Right lobe of liver (tissue), 6 donors: ENCODE measurements at regions of chr21 and their contacts with region 1.

Region 1: DNA sequence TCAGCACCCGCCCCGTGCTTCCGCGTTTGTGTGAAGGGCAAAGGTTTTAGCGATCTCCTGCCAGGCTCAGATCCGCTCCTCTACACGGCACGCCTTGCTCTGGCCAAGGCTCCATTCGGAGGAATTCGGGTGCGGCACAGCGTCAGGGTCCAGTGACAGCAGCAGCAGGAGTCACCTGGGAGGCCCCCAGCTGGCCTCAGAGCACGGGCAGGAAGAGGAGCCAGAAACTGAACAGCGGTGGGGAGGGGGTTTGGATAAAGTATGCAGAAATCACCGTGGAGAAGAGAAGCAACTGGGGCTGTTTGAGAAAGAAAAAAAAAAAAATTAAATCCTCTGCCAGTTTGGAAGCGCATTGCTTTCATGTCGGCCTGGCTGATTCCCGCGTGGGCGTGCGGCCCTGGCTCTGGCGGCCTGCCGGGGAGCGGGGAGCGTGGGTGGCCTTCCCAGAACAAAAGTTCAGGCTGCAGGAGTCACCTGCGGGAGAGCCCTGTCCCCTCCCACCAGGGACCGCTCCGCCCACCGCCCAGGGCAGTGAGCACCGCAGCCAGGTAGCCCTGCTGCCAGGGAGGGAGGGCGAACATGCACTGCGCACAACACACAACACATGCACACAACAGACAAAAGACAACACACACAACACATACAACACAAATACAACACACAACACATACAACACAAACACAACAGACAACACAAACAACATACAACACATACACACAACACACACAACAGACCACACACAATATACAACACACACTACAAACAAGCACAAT is 107.6 kb downstream of the ETS2 start:
- DNase-seq: peak; percentile 93 to 96 (median 96)
- ATAC-seq: peak; percentile 70 to 90 (median 82)
- H3K4me3 ChIP-seq: peak overlapping the region in 2 of 3 donors; percentile 39 to 43
- H3K27ac ChIP-seq: peak overlapping the region; percentile 93 to 98 (median 94)
- H3K4me1 ChIP-seq: peaks cover 0 to 79% (median 38%) of the 10 kb centered on the region in 4 donors
- H3K27me3 ChIP-seq: no peaks in the 10 kb centered on the region
- CTCF ChIP-seq: no peak
- POLR2A ChIP-seq: peak; percentile 79

Region 2: GRCh38 chr21:38733973-38734546 is 179.2 kb before region 1 on chr21:
- intact Hi-C with region 1: no loop called
- DNase-seq: peak; percentile 87 to 90 (median 88)
- ATAC-seq: peak; percentile 94 to 99 (median 97)
- H3K4me3 ChIP-seq: peak overlapping the region in 1 of 3 donors; percentile 17
- H3K27ac ChIP-seq: peak overlapping the region; percentile 35 to 63 (median 41)
- H3K4me1 ChIP-seq: peaks cover 0 to 3% (median 0%) of the 10 kb centered on the region in 4 donors
- H3K27me3 ChIP-seq: no peaks in the 10 kb centered on the region
- CTCF ChIP-seq: peak; percentile 94 to 95 (median 94)
- POLR2A ChIP-seq: no peak

Region 3: GRCh38 chr21:38848187-38848609 is 65.1 kb before region 1 on chr21:
- intact Hi-C with region 1: no loop called
- DNase-seq: no peak
- ATAC-seq: peak; percentile 23 to 62 (median 46)
- H3K4me3 ChIP-seq: no peak overlapping the region
- H3K27ac ChIP-seq: peak overlapping the region; percentile 62 to 94 (median 74)
- H3K4me1 ChIP-seq: peaks cover 0 to 20% (median 8%) of the 10 kb centered on the region in 4 donors
- H3K27me3 ChIP-seq: no peaks in the 10 kb centered on the region
- CTCF ChIP-seq: no peak
- POLR2A ChIP-seq: no peak

Region 4: DNA sequence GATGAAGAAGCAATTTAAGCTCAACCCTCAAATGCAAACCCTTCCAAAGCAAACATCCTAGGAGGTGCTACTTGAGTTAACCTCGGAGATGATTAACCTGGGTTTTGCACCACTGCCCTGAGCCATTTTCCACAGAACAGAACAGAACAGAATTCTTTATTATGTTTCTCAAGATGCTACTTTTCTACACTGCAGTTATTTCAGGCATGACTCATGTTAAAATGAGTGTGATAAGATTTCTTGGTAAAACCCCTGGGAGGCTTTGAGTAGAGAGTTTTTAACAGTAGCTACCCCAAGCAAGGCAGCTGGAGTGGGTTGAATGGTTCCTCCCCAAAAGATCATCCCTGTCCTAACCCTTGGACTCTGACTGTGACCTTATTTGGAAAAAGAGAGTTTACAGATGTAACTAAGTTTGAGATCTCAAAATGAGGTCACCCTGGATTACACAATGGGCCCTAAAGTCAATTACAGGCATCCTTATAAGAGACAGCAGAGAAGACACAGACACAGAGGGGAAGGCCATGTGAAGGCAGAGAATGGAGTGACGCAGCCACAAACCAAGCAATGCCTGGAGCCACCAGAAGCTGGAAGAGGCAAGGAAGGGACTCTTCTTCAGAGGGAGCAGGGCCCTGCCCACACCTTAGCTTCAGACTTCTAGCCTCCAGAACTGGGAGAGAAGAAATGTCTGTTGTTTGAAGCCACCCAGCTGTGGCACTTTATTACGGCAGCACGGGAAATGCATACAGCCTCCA is 45.8 kb after region 1 on chr21:
- intact Hi-C with region 1: no loop called
- DNase-seq: peak; percentile 42 to 86 (median 67)
- ATAC-seq: peak; percentile 74 to 86 (median 80)
- H3K4me3 ChIP-seq: peak overlapping the region in 2 of 3 donors; percentile 10 to 19
- H3K27ac ChIP-seq: peak overlapping the region; percentile 74 to 88 (median 85)
- H3K4me1 ChIP-seq: peaks cover 0 to 35% (median 16%) of the 10 kb centered on the region in 4 donors
- H3K27me3 ChIP-seq: no peaks in the 10 kb centered on the region
- CTCF ChIP-seq: no peak
- POLR2A ChIP-seq: peak; percentile 77

Region 5: GRCh38 chr21:39033878-39034602 is 120.7 kb after region 1 on chr21:
- intact Hi-C with region 1: loop called in 1 of 2 experiments (anchors 5 kb)
- DNase-seq: peak; percentile 95 to 97 (median 97)
- ATAC-seq: peak; percentile 91 to 98 (median 94)
- H3K4me3 ChIP-seq: peak overlapping the region in 1 of 3 donors; percentile 22
- H3K27ac ChIP-seq: peak overlapping the region; percentile 81 to 94 (median 92)
- H3K4me1 ChIP-seq: peaks cover 0 to 19% (median 10%) of the 10 kb centered on the region in 4 donors
- H3K27me3 ChIP-seq: no peaks in the 10 kb centered on the region
- CTCF ChIP-seq: peak in 2 of 4 donors; percentile 9 to 13
- POLR2A ChIP-seq: peak; percentile 55